ENCODE measurements at regions of chr7 and their contacts with region 1.

Region 1: GRCh38 chr7:90708841-90709317 is 112.8 kb downstream of the CDK14 start:
- DNase-seq: peak; percentile 90
- H3K4me3 ChIP-seq: peak overlapping the region; percentile 46
- H3K27ac ChIP-seq: peak overlapping the region; percentile 71
- H3K4me1 ChIP-seq: peaks cover 75% of the 10 kb centered on the region
- H3K27me3 ChIP-seq: no peaks in the 10 kb centered on the region
- CTCF ChIP-seq: peak; percentile 96

Region 2: GRCh38 chr7:89994483-89994882 is 714.4 kb before region 1 on chr7:
- CTCF ChIA-PET with region 1: no interaction called
- POLR2A ChIA-PET with region 1: no interaction called
- intact Hi-C with region 1: no loop called
- DNase-seq: no peak
- H3K4me3 ChIP-seq: no peak overlapping the region
- H3K27ac ChIP-seq: no peak overlapping the region
- H3K4me1 ChIP-seq: no peaks in the 10 kb centered on the region
- H3K27me3 ChIP-seq: peaks cover 4% of the 10 kb centered on the region
- CTCF ChIP-seq: no peak

Region 3: DNA sequence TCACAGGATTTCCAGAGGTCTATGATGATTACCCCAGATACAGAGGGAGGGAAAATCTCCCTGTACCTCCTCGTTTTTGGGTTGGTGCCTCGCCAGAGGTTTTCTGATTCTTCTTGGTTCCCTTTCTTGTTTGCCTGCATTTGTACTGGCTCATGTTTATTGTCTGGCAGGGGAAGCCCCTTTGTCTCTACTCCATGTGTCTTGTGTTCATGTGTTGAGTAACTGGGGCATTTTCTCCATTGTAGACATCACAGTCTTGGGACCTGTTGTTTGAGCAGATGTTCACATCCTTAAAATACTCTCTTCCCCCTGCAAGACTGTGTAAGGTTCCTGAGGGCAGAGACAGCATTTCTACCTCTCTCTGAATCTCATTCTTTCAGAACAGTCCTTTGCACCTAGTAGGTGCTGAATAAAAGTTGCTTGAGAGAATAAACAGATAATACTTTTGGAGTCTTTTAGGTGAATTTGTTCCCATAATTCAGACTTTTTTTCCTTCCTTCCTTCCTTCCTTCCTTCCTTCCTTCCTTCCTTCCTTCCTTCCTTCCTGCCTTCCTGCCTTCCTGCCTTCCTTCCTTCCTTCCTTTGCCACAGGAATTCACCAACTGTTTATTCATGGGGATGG is 87.6 kb before region 1 on chr7:
- CTCF ChIA-PET with region 1: no interaction called
- POLR2A ChIA-PET with region 1: no interaction called
- intact Hi-C with region 1: loop called (anchors 5 kb)
- DNase-seq: peak; percentile 93
- H3K4me3 ChIP-seq: no peak overlapping the region
- H3K27ac ChIP-seq: peak overlapping the region; percentile 97
- H3K4me1 ChIP-seq: peaks cover 97% of the 10 kb centered on the region
- H3K27me3 ChIP-seq: no peaks in the 10 kb centered on the region
- CTCF ChIP-seq: no peak

Measured in A673 (cell line).